B cell (primary cell): ENCODE measurements at regions of chr12 and their contacts with region 1.

Region 1: DNA sequence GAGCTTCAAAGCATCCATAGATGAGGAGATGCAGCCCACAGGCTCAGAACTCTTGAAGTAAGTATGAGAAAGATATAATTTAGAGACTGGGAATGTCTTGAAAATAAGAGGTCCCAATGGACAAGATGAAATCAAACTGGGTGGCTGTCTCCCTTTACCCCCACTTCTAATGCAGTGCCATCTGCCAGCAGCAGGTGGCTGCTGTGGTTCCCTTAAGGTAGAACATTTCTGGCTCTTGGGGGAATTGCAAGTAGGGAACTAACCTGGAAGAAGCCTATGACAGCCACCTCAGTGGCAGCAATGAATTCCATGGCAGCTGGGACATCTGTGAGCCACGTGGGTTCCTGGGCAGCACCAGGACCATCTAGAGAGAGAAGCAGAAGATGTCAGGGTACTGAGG is 648 bp downstream of the ERP27 start:
- DNase-seq: no peak
- ATAC-seq: peak; percentile 39
- H3K4me3 ChIP-seq: no peak overlapping the region
- H3K4me3 Mint-ChIP-seq: no peak overlapping the region
- H3K27ac ChIP-seq: peak overlapping the region in 1 of 2 donors; percentile 14
- H3K27ac Mint-ChIP-seq: peak overlapping the region; percentile 63
- H3K4me1 ChIP-seq: peaks cover 11 to 19% of the 10 kb centered on the region in 2 donors
- H3K4me1 Mint-ChIP-seq: peaks cover 28% of the 10 kb centered on the region
- H3K27me3 ChIP-seq: no peaks in the 10 kb centered on the region
- H3K27me3 Mint-ChIP-seq: no peaks in the 10 kb centered on the region
- CTCF ChIP-seq: peak; percentile 29

Region 2: DNA sequence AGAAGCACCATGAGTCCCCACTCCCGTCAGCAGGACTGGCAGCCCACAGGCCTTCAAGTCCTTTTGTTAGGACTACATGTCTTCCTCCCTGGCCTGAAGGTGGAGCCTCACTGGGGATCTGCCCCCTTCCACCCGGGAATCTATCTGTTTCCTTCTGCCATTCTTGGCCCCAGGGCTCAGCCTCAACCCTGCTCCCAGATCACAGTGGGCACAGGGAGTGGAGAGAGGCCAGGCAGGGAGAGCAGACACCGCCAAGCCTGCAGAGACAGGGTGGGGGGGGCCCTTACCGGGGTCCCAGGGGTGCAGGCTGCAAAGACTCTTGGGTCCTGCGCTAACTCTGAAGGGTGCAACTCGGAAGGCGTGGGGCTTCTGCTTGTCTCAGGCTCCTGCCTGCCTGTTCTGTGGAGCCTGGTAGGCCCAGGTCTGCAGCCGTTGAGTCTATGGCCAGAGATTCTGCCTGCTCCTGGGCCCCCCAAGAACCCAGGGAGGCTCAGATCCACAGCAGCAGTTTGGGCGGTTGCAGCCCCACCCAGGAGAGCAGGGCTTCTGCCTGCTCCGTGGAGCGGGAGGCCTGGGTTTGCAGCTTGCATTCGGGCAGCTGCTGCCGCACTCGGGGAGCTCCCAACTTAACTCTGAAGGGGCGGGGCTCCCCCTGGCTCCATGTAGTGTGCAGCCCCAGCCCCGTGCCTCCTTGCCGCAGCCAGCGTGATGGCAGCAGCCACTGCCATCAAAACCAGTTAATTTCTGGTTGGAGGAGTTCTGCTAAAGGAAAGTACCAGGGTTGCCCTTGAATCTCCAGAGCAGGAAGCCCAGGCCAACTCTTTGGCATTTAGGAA is 348.3 kb before region 1 on chr12:
- CTCF ChIA-PET with region 1: no interaction called
- POLR2A ChIA-PET with region 1: no interaction called
- intact Hi-C with region 1: no loop called
- DNase-seq: no peak
- ATAC-seq: no peak
- H3K4me3 ChIP-seq: no peak overlapping the region
- H3K4me3 Mint-ChIP-seq: no peak overlapping the region
- H3K27ac ChIP-seq: no peak overlapping the region
- H3K27ac Mint-ChIP-seq: no peak overlapping the region
- H3K4me1 ChIP-seq: no peaks in the 10 kb centered on the region
- H3K4me1 Mint-ChIP-seq: no peaks in the 10 kb centered on the region
- H3K27me3 ChIP-seq: no peaks in the 10 kb centered on the region
- H3K27me3 Mint-ChIP-seq: no peaks in the 10 kb centered on the region
- CTCF ChIP-seq: no peak

Region 3: DNA sequence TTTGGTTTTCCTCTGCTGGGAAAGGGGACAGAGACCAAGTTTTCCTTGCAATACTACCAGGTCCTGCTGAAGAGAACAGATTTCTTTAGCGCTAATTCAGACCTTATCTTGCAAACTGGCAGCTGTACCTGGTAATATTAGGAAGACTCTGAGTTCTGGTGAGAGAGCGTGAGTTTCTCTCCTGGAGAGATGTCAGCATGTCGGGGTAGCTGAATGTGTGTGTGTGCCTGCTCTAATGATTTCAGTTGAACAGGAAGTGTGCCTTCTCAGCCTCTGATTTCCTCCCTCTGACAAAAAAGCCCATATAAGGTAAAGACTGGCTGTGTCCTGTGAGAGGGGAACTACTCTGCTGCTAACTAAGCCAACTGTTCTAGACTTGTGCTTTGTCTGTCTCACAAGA is 11.0 kb after region 1 on chr12:
- CTCF ChIA-PET with region 1: interaction called, 6 read pairs
- POLR2A ChIA-PET with region 1: no interaction called
- intact Hi-C with region 1: loop called (anchors 1 kb)
- DNase-seq: peak; percentile 88
- ATAC-seq: peak; percentile 94
- H3K4me3 ChIP-seq: peak overlapping the region in 3 of 5 experiments; percentile 26 to 53 (median 27)
- H3K4me3 Mint-ChIP-seq: peak overlapping the region; percentile 84
- H3K27ac ChIP-seq: peak overlapping the region; percentile 65 to 94
- H3K27ac Mint-ChIP-seq: peak overlapping the region; percentile 97
- H3K4me1 ChIP-seq: peaks cover 61 to 71% of the 10 kb centered on the region in 2 donors
- H3K4me1 Mint-ChIP-seq: peaks cover 72% of the 10 kb centered on the region
- H3K27me3 ChIP-seq: no peaks in the 10 kb centered on the region
- H3K27me3 Mint-ChIP-seq: no peaks in the 10 kb centered on the region
- CTCF ChIP-seq: no peak